ENCODE measurements at regions of chr16 and their contacts with region 1.

Region 1: DNA sequence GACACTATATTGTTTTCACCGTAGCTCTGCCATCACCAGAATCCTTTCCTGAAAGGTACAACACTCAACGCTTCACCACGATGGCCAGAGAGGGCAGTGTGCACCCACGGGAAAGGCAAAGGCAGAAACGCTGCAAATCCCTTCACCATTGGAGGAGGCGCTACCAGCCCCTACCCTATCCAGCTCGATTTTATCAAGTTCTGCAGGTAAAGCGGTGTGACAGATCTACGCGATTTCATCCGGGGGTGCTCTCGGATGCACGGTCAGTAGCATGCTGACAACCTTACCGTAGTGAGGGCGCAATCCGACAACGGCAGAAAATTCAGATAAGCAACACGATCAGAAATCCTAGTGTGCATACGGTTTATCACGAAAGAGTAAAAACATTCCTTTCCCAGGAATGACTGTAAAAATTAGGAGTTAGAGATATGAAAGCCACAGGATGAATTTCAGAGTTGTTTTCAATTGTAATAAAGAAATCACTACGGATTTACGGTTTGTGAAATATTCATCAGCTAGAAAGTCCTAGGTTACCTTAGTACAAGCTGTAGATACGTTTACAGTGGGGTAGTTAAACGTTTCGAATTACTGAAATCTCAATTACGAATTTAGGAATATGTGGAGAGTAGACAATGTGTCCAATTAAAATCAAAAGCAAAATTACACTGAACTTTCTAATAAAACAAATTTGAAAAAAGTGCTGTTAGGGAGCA is 1.8 kb downstream of the NETO2 start:
- DNase-seq: peak; percentile 59 to 90 (median 70)
- ATAC-seq: peak; percentile 84
- H3K4me3 ChIP-seq: peak overlapping the region; percentile 64
- H3K27ac ChIP-seq: peak overlapping the region; percentile 81; the same call in 1 of the 3 replicates
- H3K4me1 ChIP-seq: peaks cover 8 to 21% of the 10 kb centered on the region in 2 experiments; a peak in 4 of 5 replicates
- H3K27me3 ChIP-seq: no peaks in the 10 kb centered on the region
- CTCF ChIP-seq: peak; percentile 98
- EP300 ChIP-seq: no peak
- POLR2A ChIP-seq: no peak
- RAD21 ChIP-seq: peak; percentile 72 to 81

Region 2: GRCh38 chr16:47284999-47285398 is 143.1 kb after region 1 on chr16:
- CTCF ChIA-PET with region 1: no interaction called
- POLR2A ChIA-PET with region 1: no interaction called
- in situ Hi-C with region 1: no loop called
- intact Hi-C with region 1: no loop called
- DNase-seq: no peak
- ATAC-seq: no peak
- H3K4me3 ChIP-seq: no peak overlapping the region
- H3K27ac ChIP-seq: no peak overlapping the region
- H3K4me1 ChIP-seq: no peaks in the 10 kb centered on the region
- H3K27me3 ChIP-seq: no peaks in the 10 kb centered on the region
- CTCF ChIP-seq: no peak
- EP300 ChIP-seq: no peak
- POLR2A ChIP-seq: no peak
- RAD21 ChIP-seq: no peak

Region 3: DNA sequence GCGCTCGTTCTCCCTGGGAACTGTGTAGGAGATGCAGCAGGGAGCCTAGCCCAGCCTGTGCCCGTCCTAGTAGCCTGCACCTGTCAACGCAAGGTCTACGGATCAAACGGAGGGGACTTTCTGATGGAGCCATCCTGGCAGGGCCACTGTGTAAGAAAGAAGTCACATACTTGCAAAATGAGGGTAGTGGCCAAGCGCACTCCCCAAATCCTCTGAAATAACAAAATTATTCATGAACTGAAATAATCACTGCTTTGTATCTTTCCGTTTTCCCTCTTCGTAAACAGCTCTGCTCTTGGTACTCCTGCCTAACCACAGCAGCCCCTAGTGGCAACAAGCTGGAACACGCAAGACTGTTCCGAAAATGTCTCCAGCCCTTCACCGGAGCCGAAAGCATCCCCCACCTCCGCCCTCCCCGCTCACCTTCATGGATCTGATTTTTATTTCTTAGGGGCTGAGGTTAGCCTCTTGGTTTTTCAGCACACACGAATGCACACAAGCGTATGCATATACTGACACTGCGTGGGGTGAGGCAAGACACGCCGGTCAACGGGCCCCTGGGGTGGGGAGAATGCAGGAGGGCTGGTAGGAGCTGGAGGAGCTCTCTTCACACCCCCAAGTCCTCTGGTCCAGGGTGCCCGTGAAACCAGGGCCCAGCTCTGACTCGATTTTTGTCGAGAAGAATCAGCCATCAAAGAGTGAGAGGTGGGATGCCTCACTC is 913.1 kb after region 1 on chr16:
- CTCF ChIA-PET with region 1: no interaction called
- POLR2A ChIA-PET with region 1: no interaction called
- in situ Hi-C with region 1: no loop called
- intact Hi-C with region 1: loop called (anchors 5 kb)
- DNase-seq: peak; percentile 25 to 46 (median 40)
- ATAC-seq: peak; percentile 93
- H3K4me3 ChIP-seq: no peak overlapping the region
- H3K27ac ChIP-seq: no peak overlapping the region
- H3K4me1 ChIP-seq: no peaks in the 10 kb centered on the region; a peak in 1 of 5 replicates
- H3K27me3 ChIP-seq: peaks cover 7 to 17% of the 10 kb centered on the region in 2 experiments; a peak in 3 of 5 replicates
- CTCF ChIP-seq: peak; percentile 59 to 88 (median 74)
- EP300 ChIP-seq: no peak
- POLR2A ChIP-seq: no peak
- RAD21 ChIP-seq: peak; percentile 35 to 59

Measured in K562 (cell line).